ENCODE measurements at regions of chr1 and their contacts with region 1.

Region 1: GRCh38 chr1:203597331-203598090 is 29.1 kb upstream of the ATP2B4 start:
- DNase-seq: peak in 9 of 10 donors; percentile 30 to 78 (median 61)
- H3K4me3 ChIP-seq: no peak overlapping the region
- H3K27ac ChIP-seq: peak overlapping the region in 32 of 59 donors; percentile 12 to 76 (median 51)
- H3K27me3 ChIP-seq: no peaks in the 10 kb centered on the region
- CTCF ChIP-seq: no peak

Region 2: GRCh38 chr1:203368624-203369451 is 228.7 kb before region 1 on chr1:
- intact Hi-C with region 1: no loop called
- DNase-seq: no peak
- H3K4me3 ChIP-seq: no peak overlapping the region
- H3K27ac ChIP-seq: peak overlapping the region in 1 of 59 donors; percentile 18
- H3K27me3 ChIP-seq: no peaks in the 10 kb centered on the region
- CTCF ChIP-seq: peak in 25 of 56 donors; percentile 8 to 46 (median 20)

Region 3: DNA sequence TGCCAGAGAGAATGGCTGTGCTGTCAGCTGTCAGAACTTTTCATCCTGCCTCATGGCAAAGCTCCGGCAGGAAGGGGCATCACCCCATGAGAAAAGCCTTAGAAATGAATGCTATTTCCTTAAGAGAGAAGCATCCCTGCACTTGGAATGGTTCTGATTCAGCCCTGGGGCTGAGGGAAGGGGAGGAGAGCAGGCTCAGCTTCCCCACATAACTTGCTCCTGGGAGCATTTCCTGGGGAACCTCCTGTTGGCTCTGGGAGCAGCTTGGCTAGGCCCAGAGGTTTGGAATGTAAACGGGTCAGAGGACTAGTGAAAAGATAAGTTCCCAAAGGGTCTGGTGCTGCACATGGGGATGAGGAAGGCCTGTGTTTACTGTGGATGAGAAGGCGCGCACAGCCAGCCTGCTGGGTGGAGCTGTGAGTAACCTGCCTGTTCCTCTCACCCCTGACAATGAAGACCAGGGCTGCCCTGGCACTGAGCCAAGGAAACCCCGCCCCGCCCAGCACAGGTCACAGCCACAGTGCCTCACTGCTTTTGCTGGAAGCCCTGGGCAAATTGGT is 116.9 kb before region 1 on chr1:
- intact Hi-C with region 1: no loop called
- DNase-seq: no peak
- H3K4me3 ChIP-seq: peak overlapping the region in 9 of 59 donors; percentile 1 to 59 (median 15)
- H3K27ac ChIP-seq: peak overlapping the region in 56 of 59 donors; percentile 22 to 94 (median 72)
- H3K27me3 ChIP-seq: no peaks in the 10 kb centered on the region
- CTCF ChIP-seq: no peak

Region 4: DNA sequence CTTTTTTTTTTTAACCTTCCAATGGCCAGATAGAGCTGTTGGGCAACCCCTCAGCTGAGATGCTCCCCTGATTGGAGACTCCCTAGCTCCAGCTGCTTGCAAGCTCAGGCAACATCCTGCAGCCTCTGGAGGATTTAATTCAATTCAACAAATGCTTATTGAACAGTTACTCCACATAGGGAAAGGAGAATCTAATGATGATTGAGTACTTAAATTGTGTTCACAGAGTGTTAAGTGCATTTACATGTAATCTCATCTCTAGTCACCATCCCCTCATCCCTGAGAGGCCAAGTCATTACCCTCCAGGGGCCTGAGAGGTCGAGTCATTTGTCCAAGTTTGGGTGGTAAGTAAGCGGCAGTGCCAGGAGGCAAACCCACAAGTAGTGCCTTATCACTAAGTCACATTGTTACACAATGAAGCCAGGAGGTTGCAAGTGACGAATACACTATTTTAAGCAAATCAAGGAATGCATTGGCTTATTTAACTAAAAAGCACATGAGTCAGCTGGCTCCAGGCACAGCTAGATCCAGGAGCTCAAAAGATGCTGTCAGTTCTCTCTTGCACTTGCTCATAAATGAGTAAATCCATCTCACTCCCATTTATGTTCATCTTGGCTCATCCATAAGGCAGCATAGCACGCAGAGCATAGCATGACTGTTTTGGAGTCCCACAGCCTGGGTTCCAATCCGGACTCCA is 39.3 kb before region 1 on chr1:
- intact Hi-C with region 1: loop called in 1 of 2 experiments (anchors 1 kb)
- DNase-seq: peak in 5 of 10 donors; percentile 23 to 69 (median 59)
- H3K4me3 ChIP-seq: no peak overlapping the region
- H3K27ac ChIP-seq: peak overlapping the region in 50 of 59 donors; percentile 3 to 89 (median 74)
- H3K27me3 ChIP-seq: no peaks in the 10 kb centered on the region
- CTCF ChIP-seq: no peak

Measured in dorsolateral prefrontal cortex (tissue), 120 donors.